ENCODE measurements at regions of chr1 and their contacts with region 1.

Region 1: DNA sequence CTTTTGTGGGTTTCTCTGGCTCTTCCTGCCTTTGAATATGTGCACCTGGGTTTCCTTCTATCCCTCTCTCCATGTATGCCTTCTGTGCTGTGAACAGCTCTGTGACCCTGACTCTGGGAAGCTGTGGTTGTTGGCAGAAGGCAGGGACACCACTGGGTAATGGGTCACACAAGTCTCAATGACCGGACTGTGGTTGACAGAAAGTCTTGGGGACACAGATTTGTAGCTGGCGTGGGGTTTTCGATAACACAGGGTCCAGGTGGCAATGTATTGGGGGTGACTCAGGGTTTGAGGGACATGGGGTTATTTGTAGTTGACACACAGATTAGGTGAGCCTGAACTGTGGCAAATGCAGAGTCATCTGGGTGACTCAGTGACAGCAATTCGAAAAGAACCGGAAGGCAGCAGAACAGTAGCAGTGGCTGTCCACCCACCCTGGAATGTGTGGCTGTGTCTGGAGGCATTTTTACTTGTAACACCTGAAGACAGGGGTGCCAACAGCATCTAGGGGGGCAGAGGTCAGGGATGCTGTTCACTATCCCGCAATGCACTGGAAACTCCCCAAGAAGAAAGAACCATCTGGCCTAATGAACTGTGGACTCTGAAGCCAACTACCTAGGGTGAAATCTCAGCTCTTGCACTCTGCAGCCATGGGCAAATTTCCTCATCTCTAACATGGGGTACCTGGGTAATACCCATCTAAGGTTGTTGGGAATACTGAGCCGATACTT is 13.0 kb upstream of the SLC6A9 start:
- DNase-seq: no peak
- H3K4me3 ChIP-seq: no peak overlapping the region
- H3K27ac ChIP-seq: no peak overlapping the region
- H3K4me1 ChIP-seq: no peaks in the 10 kb centered on the region
- H3K27me3 ChIP-seq: no peaks in the 10 kb centered on the region
- CTCF ChIP-seq: no peak
- POLR2A ChIP-seq: no peak

Region 2: DNA sequence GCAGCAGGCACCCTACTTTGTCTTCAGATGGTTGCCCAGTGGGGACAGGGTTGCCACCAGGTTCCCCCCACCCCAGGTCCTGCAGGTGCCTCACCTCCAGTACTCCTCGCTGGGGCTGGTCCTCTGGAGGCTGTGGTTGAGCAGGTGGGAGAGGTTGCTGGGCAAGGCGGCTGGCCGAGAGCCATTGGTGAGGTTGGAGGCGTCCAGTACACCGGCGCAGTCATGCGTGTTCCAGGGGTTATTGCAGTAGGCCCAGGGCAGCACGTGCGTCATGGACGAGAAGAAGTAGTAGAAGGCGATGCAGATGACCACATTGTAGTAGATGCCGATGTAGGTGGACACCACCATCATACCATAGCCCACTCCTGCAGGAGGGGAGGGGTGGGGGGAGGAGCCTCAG is 36.0 kb before region 1 on chr1:
- intact Hi-C with region 1: loop called (anchors 5 kb)
- DNase-seq: no peak
- H3K4me3 ChIP-seq: no peak overlapping the region
- H3K27ac ChIP-seq: no peak overlapping the region
- H3K4me1 ChIP-seq: peaks cover 21% of the 10 kb centered on the region
- H3K27me3 ChIP-seq: no peaks in the 10 kb centered on the region
- CTCF ChIP-seq: no peak
- POLR2A ChIP-seq: no peak

Region 3: GRCh38 chr1:44170281-44170823 is 126.1 kb after region 1 on chr1:
- intact Hi-C with region 1: no loop called
- DNase-seq: no peak
- H3K4me3 ChIP-seq: no peak overlapping the region
- H3K27ac ChIP-seq: no peak overlapping the region
- H3K4me1 ChIP-seq: no peaks in the 10 kb centered on the region
- H3K27me3 ChIP-seq: no peaks in the 10 kb centered on the region
- CTCF ChIP-seq: no peak
- POLR2A ChIP-seq: no peak